ENCODE measurements at regions of chr19 and their contacts with region 1.

Region 1: GRCh38 chr19:6862673-6863078 is 24.7 kb upstream of the ADGRE1 start:
- DNase-seq: peak; percentile 77
- ATAC-seq: peak; percentile 89
- H3K4me3 Mint-ChIP-seq: peak overlapping the region; percentile 85
- H3K27ac Mint-ChIP-seq: peak overlapping the region; percentile 76
- H3K4me1 Mint-ChIP-seq: peaks cover 15% of the 10 kb centered on the region
- H3K27me3 Mint-ChIP-seq: peaks cover 2% of the 10 kb centered on the region
- CTCF ChIP-seq: no peak

Region 2: DNA sequence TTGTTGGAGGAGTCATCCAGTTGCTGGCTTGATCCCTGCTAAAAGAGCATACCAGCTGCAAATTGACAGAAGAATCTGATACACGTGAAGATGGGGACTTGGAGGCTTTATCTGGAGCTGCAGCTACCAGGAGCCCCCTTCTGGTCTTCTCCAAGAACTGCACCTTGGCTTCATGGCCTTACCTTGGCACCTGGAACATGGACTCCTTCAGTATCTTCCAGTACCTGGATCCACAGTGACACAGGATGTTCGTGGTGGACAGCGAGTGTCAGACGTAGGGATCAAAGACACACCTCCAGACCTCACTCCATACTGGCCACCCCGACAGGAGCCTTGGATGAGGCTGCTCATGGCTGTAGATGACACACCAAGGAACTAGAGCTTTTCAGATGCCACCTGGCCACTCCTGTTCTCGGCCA is 737.1 kb before region 1 on chr19:
- CTCF ChIA-PET with region 1: interaction called, 11 read pairs
- POLR2A ChIA-PET with region 1: interaction called, 3 read pairs
- intact Hi-C with region 1: loop called (anchors 1 kb)
- DNase-seq: peak; percentile 32
- ATAC-seq: peak; percentile 97
- H3K4me3 Mint-ChIP-seq: no peak overlapping the region
- H3K27ac Mint-ChIP-seq: no peak overlapping the region
- H3K4me1 Mint-ChIP-seq: peaks cover 5% of the 10 kb centered on the region
- H3K27me3 Mint-ChIP-seq: peaks cover 2% of the 10 kb centered on the region
- CTCF ChIP-seq: no peak

Region 3: DNA sequence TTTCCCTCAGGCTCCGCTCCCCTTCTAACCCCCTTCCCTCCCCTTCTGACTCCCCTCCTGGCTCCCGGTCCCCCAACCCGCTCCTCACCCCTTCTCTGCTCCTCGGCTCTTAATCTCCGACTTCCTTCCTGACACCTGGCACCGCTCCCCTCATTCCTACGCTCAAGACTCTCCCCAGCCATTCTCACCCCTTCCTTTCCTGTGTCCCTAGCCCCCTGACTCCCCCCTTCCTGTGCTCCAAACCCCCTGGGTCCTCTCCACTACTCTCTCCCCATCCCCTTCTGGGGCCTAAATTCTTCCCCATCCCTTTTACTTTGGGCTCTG is 500.7 kb before region 1 on chr19:
- CTCF ChIA-PET with region 1: no interaction called
- POLR2A ChIA-PET with region 1: no interaction called
- intact Hi-C with region 1: loop called (anchors 1 kb)
- DNase-seq: no peak
- ATAC-seq: no peak
- H3K4me3 Mint-ChIP-seq: peak overlapping the region; percentile 87
- H3K27ac Mint-ChIP-seq: peak overlapping the region; percentile 78
- H3K4me1 Mint-ChIP-seq: peaks cover 11% of the 10 kb centered on the region
- H3K27me3 Mint-ChIP-seq: no peaks in the 10 kb centered on the region
- CTCF ChIP-seq: no peak

Region 4: DNA sequence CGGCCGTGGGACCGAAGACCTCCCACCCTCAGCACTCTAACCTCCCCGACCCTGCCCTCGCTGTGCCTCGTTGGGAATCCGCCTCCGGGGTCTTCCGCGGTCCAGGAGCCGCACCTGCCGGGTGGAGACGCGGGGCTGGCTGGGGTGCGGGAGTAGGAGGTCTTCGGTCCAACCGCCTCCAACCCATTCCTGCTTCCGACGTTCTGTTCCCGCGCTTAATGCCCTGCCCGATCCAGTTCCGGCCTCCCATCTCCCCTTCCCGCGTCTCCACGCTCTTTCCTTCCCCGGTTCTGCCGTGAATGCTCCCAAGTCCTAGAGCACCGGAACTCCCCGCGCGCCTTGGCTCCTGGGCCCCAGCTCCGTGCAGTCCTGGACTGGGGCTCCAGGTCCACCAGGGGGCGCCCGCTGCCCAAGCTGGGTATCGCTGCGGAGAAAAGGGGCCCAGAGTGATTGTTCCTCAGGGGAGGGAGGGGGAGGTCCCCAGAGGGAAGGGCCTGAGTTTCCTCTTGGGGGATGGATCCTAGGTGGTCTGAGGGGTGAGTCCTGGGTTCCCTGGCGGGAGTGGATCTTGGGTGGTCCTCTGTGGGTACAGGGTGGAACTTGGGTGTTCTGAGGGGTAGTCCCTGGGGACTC is 345.9 kb before region 1 on chr19:
- CTCF ChIA-PET with region 1: interaction called, 52 read pairs
- POLR2A ChIA-PET with region 1: interaction called, 14 read pairs
- intact Hi-C with region 1: loop called (anchors 1 kb)
- DNase-seq: peak; percentile 92
- ATAC-seq: peak; percentile 63
- H3K4me3 Mint-ChIP-seq: peak overlapping the region; percentile 97
- H3K27ac Mint-ChIP-seq: peak overlapping the region; percentile 59
- H3K4me1 Mint-ChIP-seq: peaks cover 45% of the 10 kb centered on the region
- H3K27me3 Mint-ChIP-seq: no peaks in the 10 kb centered on the region
- CTCF ChIP-seq: peak; percentile 84

Region 5: DNA sequence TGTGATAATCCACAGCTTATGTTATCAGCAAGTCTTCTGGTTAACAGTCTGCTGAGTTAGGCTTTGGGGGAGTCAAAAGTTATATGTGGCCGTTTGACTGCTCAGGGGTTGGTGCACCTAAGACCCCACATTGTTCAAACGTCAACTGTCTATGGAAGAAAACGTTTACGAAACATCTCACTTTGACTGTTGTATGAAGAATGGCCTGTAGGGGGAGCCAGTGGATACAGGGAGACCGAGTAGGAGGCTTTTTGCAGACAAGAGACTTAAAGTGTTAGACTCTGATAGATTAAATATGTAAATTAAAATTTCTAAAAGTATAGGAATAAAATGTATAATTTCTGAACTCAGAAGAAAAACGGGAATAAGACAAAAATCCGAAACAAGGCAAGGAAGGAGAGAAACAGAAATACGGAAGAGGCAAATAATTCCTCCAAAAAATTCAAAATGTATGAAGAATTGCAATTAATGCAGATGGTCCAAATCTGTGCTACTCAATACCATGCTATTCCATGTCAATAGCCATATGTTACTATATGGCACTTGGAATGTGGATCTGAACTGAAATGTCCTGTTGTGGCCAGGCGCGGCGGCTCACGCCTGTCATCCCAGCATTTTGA is 230.6 kb before region 1 on chr19:
- CTCF ChIA-PET with region 1: interaction called, 20 read pairs
- POLR2A ChIA-PET with region 1: interaction called, 3 read pairs
- intact Hi-C with region 1: loop called (anchors 1 kb)
- DNase-seq: peak; percentile 25
- ATAC-seq: peak; percentile 81
- H3K4me3 Mint-ChIP-seq: no peak overlapping the region
- H3K27ac Mint-ChIP-seq: peak overlapping the region; percentile 26
- H3K4me1 Mint-ChIP-seq: peaks cover 29% of the 10 kb centered on the region
- H3K27me3 Mint-ChIP-seq: peaks cover 2% of the 10 kb centered on the region
- CTCF ChIP-seq: peak; percentile 65

Region 6: DNA sequence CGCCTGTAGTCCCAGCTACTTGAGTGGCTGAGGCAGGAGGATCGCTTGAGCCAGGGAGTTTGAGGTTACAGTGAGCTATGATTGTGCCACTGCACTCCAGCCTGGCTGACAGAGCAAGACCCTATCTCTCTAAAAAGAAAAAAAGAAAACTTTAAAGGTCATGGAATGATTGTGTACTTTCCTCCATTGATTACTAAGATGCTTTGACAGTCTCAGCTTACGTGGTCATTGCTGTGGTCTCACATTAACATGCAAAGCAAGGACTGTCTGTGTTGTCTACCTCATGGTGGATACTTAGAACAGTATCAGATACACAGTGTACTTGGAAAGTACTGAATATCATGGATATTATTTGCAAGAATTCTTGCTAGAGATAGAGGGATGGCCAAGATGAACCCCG is 178.7 kb before region 1 on chr19:
- CTCF ChIA-PET with region 1: no interaction called
- POLR2A ChIA-PET with region 1: no interaction called
- intact Hi-C with region 1: no loop called
- DNase-seq: no peak
- ATAC-seq: no peak
- H3K4me3 Mint-ChIP-seq: no peak overlapping the region
- H3K27ac Mint-ChIP-seq: no peak overlapping the region
- H3K4me1 Mint-ChIP-seq: no peaks in the 10 kb centered on the region
- H3K27me3 Mint-ChIP-seq: peaks cover 3% of the 10 kb centered on the region
- CTCF ChIP-seq: no peak

Region 7: GRCh38 chr19:6767357-6768235 is 95.1 kb before region 1 on chr19 and contains the start of gene SH2D3A:
- CTCF ChIA-PET with region 1: interaction called, 9 read pairs
- POLR2A ChIA-PET with region 1: interaction called, 34 read pairs
- intact Hi-C with region 1: loop called (anchors 2 kb)
- DNase-seq: peak; percentile 87
- ATAC-seq: peak; percentile 73
- H3K4me3 Mint-ChIP-seq: peak within 1 kb of the TSS; percentile 88
- H3K27ac Mint-ChIP-seq: peak within 1 kb of the TSS; percentile 85
- H3K4me1 Mint-ChIP-seq: peaks cover 46% of the 10 kb centered on the region
- H3K27me3 Mint-ChIP-seq: no peaks in the 10 kb centered on the region
- CTCF ChIP-seq: no peak
- total RNA-seq, gene SH2D3A: 18.7 and 22.6 TPM in 2 replicates

Region 8: GRCh38 chr19:6925801-6926751 is 63.4 kb after region 1 on chr19:
- CTCF ChIA-PET with region 1: no interaction called
- POLR2A ChIA-PET with region 1: no interaction called
- intact Hi-C with region 1: no loop called
- DNase-seq: no peak
- ATAC-seq: no peak
- H3K4me3 Mint-ChIP-seq: peak overlapping the region; percentile 37
- H3K27ac Mint-ChIP-seq: no peak overlapping the region
- H3K4me1 Mint-ChIP-seq: no peaks in the 10 kb centered on the region
- H3K27me3 Mint-ChIP-seq: no peaks in the 10 kb centered on the region
- CTCF ChIP-seq: no peak